ENCODE measurements at regions of chr6 and their contacts with region 1.

Region 1: DNA sequence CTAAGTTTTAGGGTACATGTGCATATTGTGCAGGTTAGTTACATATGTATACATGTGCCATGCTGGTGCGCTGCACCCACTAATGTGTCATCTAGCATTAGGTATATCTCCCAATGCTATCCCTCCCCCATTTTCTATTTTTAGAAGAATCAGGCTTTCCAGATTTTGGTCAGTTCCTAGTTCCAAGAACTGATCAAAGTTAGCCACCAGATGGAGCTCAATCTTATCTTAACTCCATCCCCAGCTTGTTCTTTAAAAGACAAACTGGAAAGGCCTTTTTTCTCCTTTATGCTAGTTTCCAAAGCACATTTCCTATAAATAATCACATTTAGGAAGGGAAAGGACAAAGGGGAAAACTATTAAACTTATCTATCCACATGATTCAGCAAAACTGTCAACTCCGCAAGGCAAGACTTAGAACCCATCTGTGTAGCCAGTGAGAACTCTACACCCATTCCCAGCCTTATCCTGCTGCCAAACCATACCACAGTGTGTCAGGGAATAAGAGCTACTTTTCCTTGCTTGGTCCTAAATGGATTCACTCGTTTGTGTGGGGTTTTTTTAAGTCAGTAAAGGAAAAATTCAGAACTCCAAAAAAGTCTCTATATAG is 22.8 kb upstream of the KHDC1 start:
- DNase-seq: no peak
- ATAC-seq: no peak
- H3K4me3 ChIP-seq: no peak overlapping the region
- H3K27ac ChIP-seq: no peak overlapping the region
- H3K4me1 ChIP-seq: no peaks in the 10 kb centered on the region
- H3K27me3 ChIP-seq: no peaks in the 10 kb centered on the region
- CTCF ChIP-seq: peak in 10 of 12 donors; percentile 13 to 54 (median 27)
- POLR2A ChIP-seq: no peak

Region 2: DNA sequence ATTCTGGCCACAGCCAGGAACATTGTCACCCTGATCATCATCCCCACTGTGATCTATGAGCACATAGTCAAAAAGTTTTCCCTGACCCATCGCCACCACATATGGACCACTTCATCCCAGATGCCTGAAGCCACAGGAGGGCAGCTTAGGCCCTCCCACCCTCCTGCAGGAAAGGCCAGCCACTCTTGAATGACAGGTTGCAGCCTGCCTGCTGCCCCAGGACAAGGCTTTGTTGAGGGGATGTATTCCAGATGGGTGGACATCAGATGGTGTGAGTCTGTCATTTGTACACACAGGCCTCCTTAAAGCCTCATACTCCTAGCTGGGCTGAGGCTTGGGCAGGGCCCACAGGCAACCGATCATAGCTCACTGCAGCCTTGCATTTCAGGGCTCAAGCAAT is 37.5 kb after region 1 on chr6:
- intact Hi-C with region 1: loop called in 6 of 10 experiments (anchors 2 to 5 kb)
- DNase-seq: no peak
- ATAC-seq: peak in 1 of 4 donors; percentile 15
- H3K4me3 ChIP-seq: no peak overlapping the region
- H3K27ac ChIP-seq: no peak overlapping the region
- H3K4me1 ChIP-seq: no peaks in the 10 kb centered on the region
- H3K27me3 ChIP-seq: peaks cover 0 to 12% (median 0%) of the 10 kb centered on the region in 9 donors
- CTCF ChIP-seq: no peak
- POLR2A ChIP-seq: no peak

Region 3: DNA sequence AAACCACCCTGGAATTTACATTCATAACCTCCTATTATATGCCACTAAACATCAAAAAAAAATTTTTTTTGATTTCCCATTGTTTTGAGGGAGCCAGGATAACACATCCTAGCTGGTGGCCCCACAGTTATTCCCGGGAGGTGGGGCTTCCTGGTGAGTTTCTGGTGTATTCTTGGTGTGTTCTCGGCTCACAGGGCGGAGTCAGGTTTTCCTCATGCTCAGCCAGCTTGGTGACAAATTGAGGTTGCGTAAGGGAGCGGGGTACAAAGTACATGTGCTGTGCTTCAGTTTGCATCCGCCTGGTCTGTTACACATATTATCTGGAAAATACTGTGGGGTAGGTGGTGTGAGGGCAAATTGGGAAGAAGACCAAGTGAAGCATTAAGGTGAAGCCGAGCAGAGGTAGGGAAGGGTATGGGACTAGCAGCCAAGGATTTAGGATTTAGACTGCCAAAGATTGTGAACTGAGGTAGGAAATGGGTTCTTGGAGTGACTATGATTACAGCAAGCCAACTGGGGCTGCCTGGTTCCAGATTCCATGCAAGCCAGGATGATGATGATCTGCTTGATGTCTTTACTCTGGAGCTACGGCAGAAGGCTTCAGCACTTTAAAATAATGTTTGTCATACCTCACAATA is 281.3 kb after region 1 on chr6:
- intact Hi-C with region 1: no loop called
- DNase-seq: peak in 4 of 5 donors; percentile 62 to 81 (median 72)
- ATAC-seq: peak; percentile 27 to 78 (median 60)
- H3K4me3 ChIP-seq: no peak overlapping the region
- H3K27ac ChIP-seq: peak overlapping the region; percentile 16 to 86 (median 64)
- H3K4me1 ChIP-seq: peaks cover 0 to 17% (median 4%) of the 10 kb centered on the region in 12 donors
- H3K27me3 ChIP-seq: no peaks in the 10 kb centered on the region
- CTCF ChIP-seq: no peak
- POLR2A ChIP-seq: peak in 1 of 2 donors; percentile 33

Measured in heart left ventricle (tissue), 16 donors.